Activated CD4-positive, alpha-beta memory T cell treated with anti-CD3 and anti-CD28 coated beads, Interleukin-2, amount 10 ng/mL, durations not matched to agents 7 days and 5 days (primary cell): ENCODE measurements at regions of chr22 and their contacts with region 1.

Region 1: DNA sequence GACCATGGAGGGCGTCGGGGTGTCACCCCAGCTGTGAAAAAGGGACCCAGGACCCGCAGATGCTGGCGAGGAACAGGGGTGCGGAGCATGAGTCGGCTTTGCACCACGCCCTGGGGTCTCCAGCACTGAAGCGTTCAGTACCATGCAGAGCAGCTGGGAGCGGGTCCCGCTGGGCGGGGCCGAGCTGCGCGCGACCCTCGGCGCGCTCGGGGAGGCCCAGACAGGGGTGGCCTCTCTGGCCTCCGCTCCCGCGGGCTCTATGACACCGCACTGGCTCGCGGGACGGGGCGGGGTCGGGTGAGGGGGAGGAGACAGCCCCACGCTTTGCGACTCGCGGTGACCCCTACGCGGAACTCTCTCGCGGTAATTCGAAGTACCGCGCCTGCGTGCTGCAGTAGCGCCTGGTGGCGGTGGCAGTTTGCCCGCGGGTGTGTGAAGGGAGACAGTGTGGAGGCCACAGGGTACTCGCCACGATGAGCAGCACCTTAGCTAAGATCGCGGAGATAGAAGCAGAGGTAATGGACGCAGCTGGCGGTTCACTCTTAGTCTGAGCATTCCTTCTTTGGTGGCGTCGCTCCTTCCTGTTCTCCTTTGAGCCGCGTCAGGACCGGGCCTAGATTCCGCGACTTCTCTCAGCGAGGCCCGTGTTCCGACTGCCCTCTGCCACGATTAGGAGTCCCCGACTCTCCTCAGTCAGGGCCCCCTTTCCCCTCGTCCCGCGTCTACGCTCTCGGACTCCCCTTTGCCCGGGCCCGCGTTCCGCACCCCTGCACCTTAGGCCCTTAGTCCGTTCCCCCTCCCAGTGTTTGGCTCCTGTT is at the start of gene DRG1:
- DNase-seq: peak; percentile 97
- H3K4me3 Mint-ChIP-seq: peak within 1 kb of the TSS; percentile 92
- H3K27ac Mint-ChIP-seq: peak within 1 kb of the TSS; percentile 79
- H3K4me1 Mint-ChIP-seq: peaks cover 22% of the 10 kb centered on the region
- H3K27me3 Mint-ChIP-seq: peaks cover under 1% of the 10 kb centered on the region
- total RNA-seq, gene DRG1: 73.4 to 86.4 TPM

Region 2: GRCh38 chr22:30920407-30920806 is 479.0 kb before region 1 on chr22:
- CTCF ChIA-PET with region 1: no interaction called
- POLR2A ChIA-PET with region 1: no interaction called
- DNase-seq: peak; percentile 82
- H3K4me3 Mint-ChIP-seq: peak overlapping the region; percentile 40
- H3K27ac Mint-ChIP-seq: no peak overlapping the region
- H3K4me1 Mint-ChIP-seq: peaks cover 15% of the 10 kb centered on the region
- H3K27me3 Mint-ChIP-seq: no peaks in the 10 kb centered on the region

Region 3: GRCh38 chr22:31345331-31346254 is 53.8 kb before region 1 on chr22:
- CTCF ChIA-PET with region 1: interaction called, 4 read pairs
- POLR2A ChIA-PET with region 1: interaction called, 28 read pairs
- DNase-seq: peak; percentile 88
- H3K4me3 Mint-ChIP-seq: peak overlapping the region; percentile 81
- H3K27ac Mint-ChIP-seq: peak overlapping the region; percentile 74
- H3K4me1 Mint-ChIP-seq: peaks cover 49% of the 10 kb centered on the region
- H3K27me3 Mint-ChIP-seq: no peaks in the 10 kb centered on the region

Region 4: DNA sequence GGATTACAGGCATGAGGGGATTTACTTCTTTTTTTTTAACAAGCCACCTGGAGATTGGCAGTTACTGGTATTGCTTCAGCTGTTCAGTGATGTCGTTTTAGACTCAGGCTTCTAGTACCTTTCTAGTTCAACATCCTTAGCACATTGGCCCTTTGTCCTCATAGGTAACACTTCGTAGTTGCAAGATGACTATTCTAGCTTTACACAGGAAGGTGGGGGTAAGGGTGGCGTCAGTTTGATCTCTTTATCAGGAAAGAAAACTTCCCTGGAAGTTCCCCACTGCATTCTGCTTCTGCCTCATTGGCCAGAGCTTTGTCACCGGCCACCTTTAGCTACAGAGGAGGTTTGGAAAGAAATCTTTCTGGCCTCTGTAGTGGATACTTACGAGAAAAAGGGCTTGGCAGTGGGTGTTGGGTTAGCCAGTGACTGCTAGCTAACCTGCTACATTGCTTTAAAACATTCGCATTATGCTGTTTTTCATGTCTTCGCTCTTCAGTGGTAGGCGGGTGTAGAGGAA is 137.7 kb after region 1 on chr22:
- CTCF ChIA-PET with region 1: no interaction called
- POLR2A ChIA-PET with region 1: no interaction called
- DNase-seq: peak; percentile 41
- H3K4me3 Mint-ChIP-seq: peak overlapping the region; percentile 38
- H3K27ac Mint-ChIP-seq: peak overlapping the region; percentile 94
- H3K4me1 Mint-ChIP-seq: peaks cover 52% of the 10 kb centered on the region
- H3K27me3 Mint-ChIP-seq: no peaks in the 10 kb centered on the region